Adrenal gland (tissue), 19 donors: ENCODE measurements at regions of chr15 and their contacts with region 1.

Region 1: GRCh38 chr15:90223441-90224165 is 10.1 kb downstream of the CIB1 start:
- DNase-seq: no peak
- H3K4me3 ChIP-seq: no peak overlapping the region
- H3K27ac ChIP-seq: no peak overlapping the region
- H3K4me1 ChIP-seq: peaks cover 0 to 9% of the 10 kb centered on the region in 2 donors
- H3K27me3 ChIP-seq: no peaks in the 10 kb centered on the region
- CTCF ChIP-seq: no peak
- POLR2A ChIP-seq: no peak

Region 2: GRCh38 chr15:90151989-90152645 is 71.5 kb before region 1 on chr15:
- intact Hi-C with region 1: loop called in 1 of 2 experiments (anchors 2 kb)
- DNase-seq: no peak
- H3K4me3 ChIP-seq: no peak overlapping the region
- H3K27ac ChIP-seq: no peak overlapping the region
- H3K4me1 ChIP-seq: no peaks in the 10 kb centered on the region
- H3K27me3 ChIP-seq: no peaks in the 10 kb centered on the region
- CTCF ChIP-seq: no peak
- POLR2A ChIP-seq: no peak

Region 3: DNA sequence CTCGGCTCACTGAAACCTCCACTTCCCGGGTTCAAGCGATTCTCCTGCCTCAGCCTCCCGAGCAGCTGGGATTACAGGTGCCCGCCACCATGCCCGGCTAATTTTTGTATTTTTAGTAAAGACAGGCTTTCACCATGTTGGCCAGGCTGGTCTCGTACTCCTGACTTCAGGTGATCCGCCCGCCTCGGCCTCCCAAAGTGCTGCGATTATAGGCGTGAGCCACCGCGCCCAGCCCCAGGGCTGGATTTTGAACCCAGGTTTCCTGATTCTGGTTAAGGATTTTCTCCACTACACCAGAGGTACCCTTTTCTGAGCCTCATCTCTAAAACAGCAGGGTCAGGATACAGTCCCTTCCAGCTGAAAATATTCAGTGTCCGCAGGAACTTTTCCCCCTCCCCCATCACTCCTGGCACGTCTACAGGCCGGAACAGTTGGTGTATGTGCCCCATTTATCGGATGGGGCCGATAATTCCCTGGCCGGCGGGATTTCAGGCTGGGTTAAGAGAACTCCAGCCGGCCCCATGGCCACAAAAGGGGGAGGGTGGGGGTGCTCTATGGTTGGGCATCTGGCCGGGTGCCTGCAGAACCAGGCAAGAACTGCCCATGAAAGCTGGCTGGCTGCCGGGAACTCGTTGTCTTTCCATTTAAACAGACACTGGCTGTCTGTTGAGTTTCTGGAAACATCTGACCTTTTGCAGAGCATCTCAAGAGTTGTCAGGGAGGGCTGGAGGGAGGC is 49.3 kb before region 1 on chr15:
- intact Hi-C with region 1: no loop called
- DNase-seq: peak; percentile 87 to 98 (median 94)
- H3K4me3 ChIP-seq: peak overlapping the region in 1 of 4 donors; percentile 0
- H3K27ac ChIP-seq: peak overlapping the region; percentile 31 to 94 (median 72)
- H3K4me1 ChIP-seq: peaks cover 12 to 17% of the 10 kb centered on the region in 2 donors
- H3K27me3 ChIP-seq: no peaks in the 10 kb centered on the region
- CTCF ChIP-seq: no peak
- POLR2A ChIP-seq: no peak

Region 4: DNA sequence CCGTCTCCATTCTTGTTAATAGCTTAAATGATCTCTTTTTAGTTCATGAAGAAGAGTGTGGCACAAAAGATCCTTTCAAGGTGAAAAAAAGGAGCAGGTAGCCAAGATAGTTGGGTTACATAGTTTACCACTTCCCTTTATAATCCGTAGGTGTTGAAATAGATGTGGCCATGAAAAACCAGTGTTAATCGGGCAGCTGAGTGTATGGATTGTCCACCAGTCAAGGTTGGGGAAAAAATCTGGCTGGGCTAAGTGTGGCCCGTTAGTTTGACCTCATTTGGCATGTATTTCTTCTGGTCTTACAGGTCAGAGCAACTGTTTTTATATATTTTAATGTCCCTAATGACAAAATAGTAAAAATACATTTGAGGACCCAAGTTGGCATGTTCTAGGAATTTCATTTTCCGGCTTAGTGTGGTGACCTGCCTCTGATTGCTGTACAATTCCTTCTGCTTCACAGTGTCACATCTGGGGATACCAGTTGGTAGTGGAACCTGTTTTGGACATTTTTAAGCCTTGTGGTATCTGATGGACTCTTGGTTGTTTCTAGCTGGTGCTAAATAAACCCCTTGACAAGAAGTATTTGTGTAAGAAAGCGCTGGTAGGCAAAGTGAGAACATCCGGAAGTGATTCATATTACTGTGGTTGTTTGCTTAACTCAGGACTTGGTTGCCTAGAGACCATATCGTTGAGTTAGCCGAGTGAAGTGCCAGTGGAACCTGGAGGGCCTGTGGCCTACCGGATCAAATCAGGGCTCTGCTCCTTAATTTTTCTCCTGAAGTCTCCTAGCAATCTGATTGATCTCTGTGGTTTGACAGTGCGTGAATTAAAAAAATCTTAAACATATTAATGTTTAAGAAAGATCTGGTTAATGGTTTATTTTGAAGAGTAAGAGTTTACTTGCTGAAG is 177.1 kb after region 1 on chr15:
- intact Hi-C with region 1: no loop called
- DNase-seq: peak; percentile 68 to 85 (median 80)
- H3K4me3 ChIP-seq: peak overlapping the region in 1 of 4 donors; percentile 33
- H3K27ac ChIP-seq: peak overlapping the region; percentile 70 to 92 (median 78)
- H3K4me1 ChIP-seq: peaks cover 38 to 78% of the 10 kb centered on the region in 2 donors
- H3K27me3 ChIP-seq: no peaks in the 10 kb centered on the region
- CTCF ChIP-seq: no peak
- POLR2A ChIP-seq: peak in 1 of 2 donors; percentile 48